Activated CD8-positive, alpha-beta T cell treated with anti-CD3 and anti-CD28 coated beads, Interleukin-2, amount 10 ng/mL, durations not matched to agents 7 days and 5 days (primary cell): ENCODE measurements at regions of chr5 and their contacts with region 1.

Region 1: GRCh38 chr5:129767906-129768380 is 20.0 kb downstream of the MINAR2 start:
- DNase-seq: peak; percentile 71
- ATAC-seq: peak; percentile 87
- H3K4me3 Mint-ChIP-seq: no peak overlapping the region
- H3K27ac Mint-ChIP-seq: no peak overlapping the region
- H3K4me1 Mint-ChIP-seq: no peaks in the 10 kb centered on the region
- H3K27me3 Mint-ChIP-seq: no peaks in the 10 kb centered on the region

Region 2: GRCh38 chr5:128905571-128906110 is 862.3 kb before region 1 on chr5:
- CTCF ChIA-PET with region 1: interaction called, 10 read pairs
- POLR2A ChIA-PET with region 1: no interaction called
- DNase-seq: peak; percentile 42
- ATAC-seq: peak; percentile 47
- H3K4me3 Mint-ChIP-seq: no peak overlapping the region
- H3K27ac Mint-ChIP-seq: no peak overlapping the region
- H3K4me1 Mint-ChIP-seq: no peaks in the 10 kb centered on the region
- H3K27me3 Mint-ChIP-seq: no peaks in the 10 kb centered on the region

Region 3: DNA sequence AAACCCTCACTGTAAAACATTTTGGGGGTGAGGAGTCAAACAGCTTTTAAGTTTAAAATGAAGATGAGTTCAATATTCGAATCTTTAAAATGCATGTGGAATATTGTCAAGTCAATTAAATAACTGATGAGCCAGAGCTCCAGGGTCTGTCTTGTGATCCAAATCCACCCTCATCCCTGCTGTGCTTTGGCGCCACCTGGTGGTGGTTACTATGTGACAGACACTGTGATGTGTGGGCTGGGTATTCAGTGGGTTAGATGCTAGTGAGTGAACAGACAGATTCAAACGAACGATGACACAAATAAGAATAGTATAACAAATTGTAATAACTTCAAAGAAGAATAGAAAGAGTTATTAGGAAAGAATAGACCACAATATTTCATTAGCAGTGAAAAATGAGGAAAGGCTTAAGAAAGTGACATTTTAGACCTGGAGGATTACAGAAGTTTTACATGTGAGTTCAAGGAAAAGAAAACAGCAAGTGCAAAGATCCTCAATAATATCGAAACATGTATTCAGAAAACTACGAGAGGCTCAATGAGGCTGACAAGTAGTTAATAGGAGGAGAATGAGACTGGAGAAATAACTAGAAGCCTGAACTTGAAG is 84.9 kb after region 1 on chr5:
- CTCF ChIA-PET with region 1: interaction called, 34 read pairs
- POLR2A ChIA-PET with region 1: no interaction called
- DNase-seq: peak; percentile 74
- ATAC-seq: peak; percentile 89
- H3K4me3 Mint-ChIP-seq: no peak overlapping the region
- H3K27ac Mint-ChIP-seq: no peak overlapping the region
- H3K4me1 Mint-ChIP-seq: no peaks in the 10 kb centered on the region
- H3K27me3 Mint-ChIP-seq: no peaks in the 10 kb centered on the region